Endothelial cell of umbilical vein (primary cell): ENCODE measurements at regions of chr19 and their contacts with region 1.

Region 1: DNA sequence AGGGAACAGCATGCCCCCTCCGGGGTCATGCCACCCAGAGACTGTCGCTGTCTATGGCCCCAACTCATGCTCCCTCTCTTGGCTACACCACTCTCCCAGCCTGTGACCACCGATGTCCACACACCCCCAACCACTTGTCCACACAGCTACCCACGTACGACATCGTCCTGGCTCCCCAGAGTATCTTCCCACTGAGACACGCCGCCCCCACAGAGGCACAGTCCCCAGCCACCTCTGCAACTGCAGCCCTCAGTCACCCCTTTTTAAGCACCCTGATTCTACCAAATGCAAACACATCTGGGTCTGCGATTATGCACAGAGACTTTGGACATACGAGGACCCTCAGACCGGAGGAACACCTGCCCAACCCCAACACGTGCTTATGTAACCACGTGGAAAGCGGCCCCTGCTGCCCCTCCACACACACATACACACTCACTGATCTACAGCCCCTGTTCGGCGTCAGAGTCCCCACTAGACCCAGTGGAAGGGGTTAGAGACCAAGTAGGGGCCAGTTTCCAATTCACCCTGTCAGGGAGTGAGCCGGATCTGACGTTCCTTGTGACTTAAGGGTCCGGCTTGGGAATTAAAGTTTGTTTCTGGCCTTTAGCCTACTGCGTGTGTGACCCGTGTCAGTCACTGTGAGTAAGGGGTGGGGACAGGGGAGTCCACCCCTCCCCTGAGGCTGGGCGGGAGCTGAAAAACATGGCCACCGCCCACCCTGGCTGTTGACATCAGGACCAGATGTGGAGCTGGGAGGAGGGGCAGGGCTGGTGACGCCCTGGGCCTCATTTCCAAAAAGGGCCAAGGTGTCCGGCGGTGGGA is 11.9 kb upstream of the AXL start:
- DNase-seq: no peak
- H3K4me3 ChIP-seq: no peak overlapping the region
- H3K27ac ChIP-seq: no peak overlapping the region
- H3K4me1 ChIP-seq: no peaks in the 10 kb centered on the region
- H3K27me3 ChIP-seq: no peaks in the 10 kb centered on the region
- CTCF ChIP-seq: no peak
- POLR2A ChIP-seq: no peak

Region 2: GRCh38 chr19:41123716-41124294 is 83.3 kb before region 1 on chr19:
- CTCF ChIA-PET with region 1: no interaction called
- POLR2A ChIA-PET with region 1: no interaction called
- dilution Hi-C with region 1: no loop called
- intact Hi-C with region 1: no loop called
- DNase-seq: no peak
- H3K4me3 ChIP-seq: no peak overlapping the region
- H3K27ac ChIP-seq: no peak overlapping the region
- H3K4me1 ChIP-seq: no peaks in the 10 kb centered on the region
- H3K27me3 ChIP-seq: peaks cover 0 to under 1% of the 10 kb centered on the region in 2 experiments
- CTCF ChIP-seq: no peak
- POLR2A ChIP-seq: no peak

Region 3: GRCh38 chr19:41218615-41219507 is 11.7 kb after region 1 on chr19 and contains the start of gene AXL:
- CTCF ChIA-PET with region 1: interaction called, 50 read pairs
- POLR2A ChIA-PET with region 1: interaction called, 5 read pairs
- dilution Hi-C with region 1: no loop called
- intact Hi-C with region 1: loop called (anchors 2 kb)
- DNase-seq: peak; percentile 73
- H3K4me3 ChIP-seq: peak within 1 kb of the TSS; percentile 59 to 96 (median 85)
- H3K27ac ChIP-seq: peak within 1 kb of the TSS; percentile 73
- H3K4me1 ChIP-seq: peaks cover 34% of the 10 kb centered on the region
- H3K27me3 ChIP-seq: no peaks in the 10 kb centered on the region
- CTCF ChIP-seq: no peak
- POLR2A ChIP-seq: peak; percentile 77
- total RNA-seq, gene AXL: 151 and 172 TPM in 2 replicates

Region 4: DNA sequence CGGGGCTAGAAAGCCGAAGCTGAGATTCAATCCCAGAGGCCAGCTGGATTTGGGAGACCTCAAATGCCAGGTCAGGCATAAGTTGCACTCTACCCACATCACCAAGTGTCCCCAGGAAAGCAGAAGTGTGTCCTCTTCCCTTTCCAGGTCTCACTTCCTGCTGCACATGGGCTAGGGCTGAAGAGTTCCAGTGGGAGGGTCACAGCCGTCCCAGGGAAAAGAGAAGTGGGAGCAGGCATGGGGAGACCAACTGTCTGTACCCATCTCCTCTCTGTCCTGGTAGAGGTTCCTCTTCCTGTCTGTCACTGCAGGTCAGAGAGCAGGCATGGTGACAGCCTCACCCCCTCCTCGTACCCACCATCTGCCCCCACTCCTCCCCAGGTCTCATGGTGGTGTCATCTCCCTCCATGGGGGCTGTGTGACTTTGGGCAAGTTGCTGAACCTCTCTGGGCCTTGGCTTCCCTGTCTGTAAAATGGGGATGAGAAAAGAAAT is 26.7 kb after region 1 on chr19:
- CTCF ChIA-PET with region 1: interaction called, 16 read pairs
- POLR2A ChIA-PET with region 1: no interaction called
- dilution Hi-C with region 1: no loop called
- intact Hi-C with region 1: no loop called
- DNase-seq: no peak
- H3K4me3 ChIP-seq: no peak overlapping the region
- H3K27ac ChIP-seq: no peak overlapping the region
- H3K4me1 ChIP-seq: no peaks in the 10 kb centered on the region
- H3K27me3 ChIP-seq: no peaks in the 10 kb centered on the region
- CTCF ChIP-seq: no peak
- POLR2A ChIP-seq: no peak

Region 5: GRCh38 chr19:41288673-41289505 is 81.8 kb after region 1 on chr19:
- CTCF ChIA-PET with region 1: interaction called, 18 read pairs
- POLR2A ChIA-PET with region 1: no interaction called
- dilution Hi-C with region 1: no loop called
- intact Hi-C with region 1: no loop called
- DNase-seq: no peak
- H3K4me3 ChIP-seq: no peak overlapping the region
- H3K27ac ChIP-seq: no peak overlapping the region
- H3K4me1 ChIP-seq: no peaks in the 10 kb centered on the region
- H3K27me3 ChIP-seq: no peaks in the 10 kb centered on the region
- CTCF ChIP-seq: no peak
- POLR2A ChIP-seq: no peak

Region 6: DNA sequence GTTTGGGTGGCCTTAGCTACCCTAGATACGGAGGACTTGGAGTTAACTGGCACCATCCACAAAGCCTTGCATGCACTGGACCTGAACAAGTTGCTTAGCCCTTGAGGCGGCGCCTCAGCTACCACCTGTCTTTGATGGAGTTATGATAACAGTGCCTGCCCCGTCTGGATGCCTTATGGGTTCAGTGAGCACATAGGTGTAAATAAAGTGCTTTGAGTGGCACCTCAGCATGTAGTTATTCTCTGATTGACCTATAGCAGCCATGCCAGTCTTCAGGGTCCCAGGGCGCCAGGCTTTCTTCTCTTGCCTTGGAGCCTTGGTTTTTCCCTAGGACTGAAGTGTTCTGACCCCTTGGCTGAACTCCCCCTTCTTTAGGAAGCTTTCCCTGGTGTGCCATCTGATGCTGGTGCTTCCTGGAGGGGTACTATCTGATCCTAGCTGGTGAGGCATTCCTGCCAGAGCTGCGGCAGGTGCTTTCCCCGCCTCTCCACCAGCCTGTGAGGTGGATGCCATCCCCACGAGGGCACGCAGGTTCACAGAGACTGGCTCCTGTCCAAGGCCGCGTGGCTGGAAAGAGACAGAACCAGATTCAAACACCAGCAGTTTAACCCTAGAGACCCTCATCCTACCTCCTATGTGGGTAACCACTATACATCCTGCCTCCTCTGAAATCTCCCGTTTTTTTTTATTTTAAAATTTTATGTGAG is 196.3 kb after region 1 on chr19:
- CTCF ChIA-PET with region 1: no interaction called
- POLR2A ChIA-PET with region 1: no interaction called
- dilution Hi-C with region 1: no loop called
- intact Hi-C with region 1: no loop called
- DNase-seq: no peak
- H3K4me3 ChIP-seq: no peak overlapping the region
- H3K27ac ChIP-seq: no peak overlapping the region
- H3K4me1 ChIP-seq: peaks cover 45% of the 10 kb centered on the region
- H3K27me3 ChIP-seq: no peaks in the 10 kb centered on the region
- CTCF ChIP-seq: no peak
- POLR2A ChIP-seq: no peak